Natural killer cell (primary cell): ENCODE measurements at regions of chr2 and their contacts with region 1.

Region 1: GRCh38 chr2:149597668-149598326 is 10.2 kb upstream of the MMADHC start:
- DNase-seq: peak; percentile 29 to 83
- ATAC-seq: peak; percentile 96 to 97 (median 96)
- H3K4me3 ChIP-seq: no peak overlapping the region
- H3K4me3 Mint-ChIP-seq: peak overlapping the region; percentile 25
- H3K27ac ChIP-seq: no peak overlapping the region
- H3K27ac Mint-ChIP-seq: peak overlapping the region; percentile 35 to 45
- H3K4me1 ChIP-seq: peaks cover 6% of the 10 kb centered on the region
- H3K4me1 Mint-ChIP-seq: peaks cover 13 to 16% of the 10 kb centered on the region in 2 donors
- H3K27me3 ChIP-seq: no peaks in the 10 kb centered on the region
- H3K27me3 Mint-ChIP-seq: peaks cover 18 to 47% of the 10 kb centered on the region in 2 donors
- CTCF ChIP-seq: peak; percentile 68

Region 2: GRCh38 chr2:150487537-150488429 is 890.0 kb after region 1 on chr2 and contains the start of gene RND3:
- intact Hi-C with region 1: loop called (anchors 5 kb)
- DNase-seq: peak in 1 of 2 donors; percentile 13
- ATAC-seq: no peak
- H3K4me3 ChIP-seq: no peak within 1 kb of the TSS
- H3K4me3 Mint-ChIP-seq: no peak within 1 kb of the TSS
- H3K27ac ChIP-seq: no peak within 1 kb of the TSS
- H3K27ac Mint-ChIP-seq: no peak within 1 kb of the TSS
- H3K4me1 ChIP-seq: no peaks in the 10 kb centered on the region
- H3K4me1 Mint-ChIP-seq: no peaks in the 10 kb centered on the region
- H3K27me3 ChIP-seq: peaks cover 13% of the 10 kb centered on the region
- H3K27me3 Mint-ChIP-seq: peaks cover 24 to 34% of the 10 kb centered on the region in 2 donors
- CTCF ChIP-seq: no peak
- total RNA-seq, gene RND3: not detected

Region 3: GRCh38 chr2:151051574-151052220 is 1453.9 kb after region 1 on chr2:
- intact Hi-C with region 1: loop called (anchors 1 kb)
- DNase-seq: peak in 1 of 2 donors; percentile 63
- ATAC-seq: peak; percentile 39 to 70 (median 40)
- H3K4me3 ChIP-seq: no peak overlapping the region
- H3K4me3 Mint-ChIP-seq: no peak overlapping the region
- H3K27ac ChIP-seq: no peak overlapping the region
- H3K27ac Mint-ChIP-seq: no peak overlapping the region
- H3K4me1 ChIP-seq: no peaks in the 10 kb centered on the region
- H3K4me1 Mint-ChIP-seq: no peaks in the 10 kb centered on the region
- H3K27me3 ChIP-seq: no peaks in the 10 kb centered on the region
- H3K27me3 Mint-ChIP-seq: peaks cover 0 to 18% of the 10 kb centered on the region in 2 donors
- CTCF ChIP-seq: peak; percentile 69

Region 4: GRCh38 chr2:151238527-151239487 is 1641.0 kb after region 1 on chr2:
- intact Hi-C with region 1: loop called (anchors 1 kb)
- DNase-seq: peak in 1 of 2 donors; percentile 72
- ATAC-seq: peak; percentile 66 to 85 (median 78)
- H3K4me3 ChIP-seq: no peak overlapping the region
- H3K4me3 Mint-ChIP-seq: no peak overlapping the region
- H3K27ac ChIP-seq: no peak overlapping the region
- H3K27ac Mint-ChIP-seq: no peak overlapping the region
- H3K4me1 ChIP-seq: no peaks in the 10 kb centered on the region
- H3K4me1 Mint-ChIP-seq: no peaks in the 10 kb centered on the region
- H3K27me3 ChIP-seq: no peaks in the 10 kb centered on the region
- H3K27me3 Mint-ChIP-seq: no peaks in the 10 kb centered on the region
- CTCF ChIP-seq: peak; percentile 86

Region 5: GRCh38 chr2:151437630-151438029 is 1839.8 kb after region 1 on chr2:
- intact Hi-C with region 1: loop called (anchors 2 kb)
- DNase-seq: peak in 1 of 2 donors; percentile 58
- ATAC-seq: peak; percentile 38 to 67 (median 59)
- H3K4me3 ChIP-seq: no peak overlapping the region
- H3K4me3 Mint-ChIP-seq: no peak overlapping the region
- H3K27ac ChIP-seq: no peak overlapping the region
- H3K27ac Mint-ChIP-seq: peak overlapping the region; percentile 59 to 74
- H3K4me1 ChIP-seq: no peaks in the 10 kb centered on the region
- H3K4me1 Mint-ChIP-seq: no peaks in the 10 kb centered on the region
- H3K27me3 ChIP-seq: no peaks in the 10 kb centered on the region
- H3K27me3 Mint-ChIP-seq: no peaks in the 10 kb centered on the region
- CTCF ChIP-seq: peak; percentile 89